ENCODE measurements at regions of chr5 and their contacts with region 1.

Region 1: DNA sequence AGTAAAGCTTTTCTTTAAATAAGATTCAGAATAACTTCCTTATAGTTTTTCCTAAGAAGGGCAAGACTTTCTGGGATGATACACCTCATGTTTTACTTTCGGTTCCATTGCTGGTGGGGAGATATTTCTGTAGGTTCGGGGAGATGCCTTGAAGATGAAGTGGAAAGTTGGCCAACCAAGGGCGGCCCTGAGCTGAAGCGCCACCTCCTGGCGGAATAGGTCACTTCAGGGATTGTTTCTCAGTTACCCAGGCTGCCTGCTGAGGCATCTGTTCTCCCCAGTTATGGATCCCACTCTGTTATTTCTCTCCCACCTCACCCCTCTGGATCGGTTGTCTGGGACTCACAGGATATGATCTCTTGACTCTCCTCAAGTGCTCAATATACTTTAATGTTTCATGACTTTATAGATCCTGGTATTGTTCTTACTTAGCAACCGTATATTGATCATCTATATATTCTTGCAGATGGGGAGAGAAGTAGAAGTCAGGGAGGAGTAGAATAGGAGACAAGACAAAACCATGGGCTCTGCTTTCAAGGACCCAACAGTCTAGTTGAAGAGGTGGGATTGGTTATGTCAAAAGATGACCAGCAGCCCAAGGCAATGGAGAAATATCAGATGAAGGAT is 23.4 kb downstream of the MEGF10 start:
- DNase-seq: peak; percentile 51 to 71
- ATAC-seq: peak in 2 of 4 donors; percentile 70 to 76
- H3K4me3 ChIP-seq: no peak overlapping the region
- H3K27ac ChIP-seq: no peak overlapping the region
- H3K4me1 ChIP-seq: peaks cover 8% of the 10 kb centered on the region
- H3K27me3 ChIP-seq: no peaks in the 10 kb centered on the region
- CTCF ChIP-seq: peak; percentile 69

Region 2: DNA sequence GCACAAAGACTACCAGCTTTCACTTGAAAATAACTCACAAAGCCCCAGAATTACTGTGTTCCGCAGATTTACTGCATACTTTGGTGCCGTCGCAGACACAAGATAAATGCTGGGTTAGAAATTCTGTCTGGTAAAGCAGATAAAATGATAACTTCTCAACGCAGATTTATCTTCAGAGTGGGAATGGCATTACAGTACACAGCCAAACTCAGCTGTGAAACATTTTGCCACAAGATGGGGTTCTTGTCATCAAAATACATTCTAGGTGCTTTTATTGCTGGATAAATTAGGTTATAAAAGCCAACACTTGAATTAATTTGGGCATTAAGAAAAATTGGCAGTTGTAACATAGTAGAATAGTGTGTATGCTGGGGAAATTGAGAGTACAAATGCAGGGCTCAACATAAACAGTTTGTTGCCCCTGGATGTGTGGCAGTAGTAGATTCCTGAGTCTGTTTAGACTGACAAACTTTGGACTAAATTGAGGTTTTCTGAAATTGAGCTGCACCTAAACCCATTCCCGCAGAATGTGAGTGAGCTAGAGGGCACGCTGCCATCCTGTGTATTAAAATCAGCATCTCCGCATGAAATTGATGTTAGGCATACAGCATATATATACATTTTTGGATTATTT is 475.9 kb before region 1 on chr5:
- intact Hi-C with region 1: loop called (anchors 10 kb)
- DNase-seq: no peak
- ATAC-seq: peak in 1 of 4 donors; percentile 63
- H3K4me3 ChIP-seq: no peak overlapping the region
- H3K27ac ChIP-seq: no peak overlapping the region
- H3K4me1 ChIP-seq: no peaks in the 10 kb centered on the region
- H3K27me3 ChIP-seq: no peaks in the 10 kb centered on the region
- CTCF ChIP-seq: peak; percentile 45

Region 3: GRCh38 chr5:127337876-127338275 is 23.9 kb after region 1 on chr5:
- intact Hi-C with region 1: no loop called
- DNase-seq: no peak
- ATAC-seq: no peak
- H3K4me3 ChIP-seq: no peak overlapping the region
- H3K27ac ChIP-seq: no peak overlapping the region
- H3K4me1 ChIP-seq: no peaks in the 10 kb centered on the region
- H3K27me3 ChIP-seq: no peaks in the 10 kb centered on the region
- CTCF ChIP-seq: no peak

Measured in psoas muscle (tissue), 8 donors.